ENCODE measurements at regions of chr1 and their contacts with region 1.

Region 1: DNA sequence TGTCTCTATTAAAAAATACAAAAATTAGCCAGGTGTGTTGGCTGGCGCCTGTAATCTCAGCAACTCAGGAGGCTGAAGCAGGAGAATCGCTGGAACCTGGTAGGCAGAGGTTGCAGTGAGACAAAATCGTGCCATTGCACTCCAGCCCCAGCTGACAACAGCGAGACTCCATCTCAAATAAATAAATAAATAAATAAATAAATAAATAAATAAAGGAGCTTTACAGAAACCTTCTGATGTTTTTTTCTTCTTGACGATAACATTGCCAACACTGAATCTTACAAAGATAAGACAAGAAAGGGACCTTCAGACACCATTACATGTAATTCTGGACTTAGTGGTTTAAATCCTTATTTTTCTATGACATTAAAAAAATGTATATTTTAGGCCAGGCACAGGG is 47.8 kb upstream of the LGALS8 start:
- DNase-seq: no peak
- H3K4me3 ChIP-seq: no peak overlapping the region
- H3K27ac ChIP-seq: no peak overlapping the region
- H3K4me1 ChIP-seq: peaks cover 2% of the 10 kb centered on the region
- H3K27me3 ChIP-seq: no peaks in the 10 kb centered on the region
- CTCF ChIP-seq: no peak
- EP300 ChIP-seq: no peak
- POLR2A ChIP-seq: no peak

Region 2: DNA sequence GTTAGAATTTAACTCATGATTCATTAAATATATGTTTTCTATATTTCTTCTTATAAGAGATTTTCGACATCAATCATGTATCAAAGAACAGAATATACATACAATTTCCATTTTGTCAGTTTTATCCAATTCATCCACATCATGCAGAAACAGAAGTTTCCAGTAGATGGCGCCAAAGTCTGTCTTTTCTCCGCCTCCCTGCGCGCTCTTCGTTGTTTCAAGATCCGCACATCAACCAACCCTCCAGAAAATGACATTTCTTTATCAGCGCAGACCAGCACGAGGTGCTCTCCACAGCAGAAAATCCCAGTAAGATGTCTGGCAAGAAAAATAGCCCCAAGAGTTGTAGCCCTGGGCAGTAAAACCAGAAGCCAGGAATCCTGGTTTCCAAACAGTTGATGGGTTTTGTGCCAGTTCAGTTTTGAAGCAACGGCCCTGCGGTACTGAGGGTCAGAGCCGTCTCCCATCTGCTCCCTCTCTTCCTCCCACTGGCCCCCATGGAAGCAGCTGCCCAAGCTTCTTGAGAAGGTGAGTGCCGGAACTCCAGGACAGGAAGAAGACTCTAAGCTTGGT is 372.3 kb before region 1 on chr1:
- intact Hi-C with region 1: loop called in 1 of 4 experiments (anchors 5 kb)
- DNase-seq: peak; percentile 28 to 55 (median 50)
- H3K4me3 ChIP-seq: no peak overlapping the region
- H3K27ac ChIP-seq: no peak overlapping the region
- H3K4me1 ChIP-seq: no peaks in the 10 kb centered on the region
- H3K27me3 ChIP-seq: no peaks in the 10 kb centered on the region
- CTCF ChIP-seq: peak; percentile 61 to 69 (median 68)
- EP300 ChIP-seq: no peak
- POLR2A ChIP-seq: no peak

Region 3: DNA sequence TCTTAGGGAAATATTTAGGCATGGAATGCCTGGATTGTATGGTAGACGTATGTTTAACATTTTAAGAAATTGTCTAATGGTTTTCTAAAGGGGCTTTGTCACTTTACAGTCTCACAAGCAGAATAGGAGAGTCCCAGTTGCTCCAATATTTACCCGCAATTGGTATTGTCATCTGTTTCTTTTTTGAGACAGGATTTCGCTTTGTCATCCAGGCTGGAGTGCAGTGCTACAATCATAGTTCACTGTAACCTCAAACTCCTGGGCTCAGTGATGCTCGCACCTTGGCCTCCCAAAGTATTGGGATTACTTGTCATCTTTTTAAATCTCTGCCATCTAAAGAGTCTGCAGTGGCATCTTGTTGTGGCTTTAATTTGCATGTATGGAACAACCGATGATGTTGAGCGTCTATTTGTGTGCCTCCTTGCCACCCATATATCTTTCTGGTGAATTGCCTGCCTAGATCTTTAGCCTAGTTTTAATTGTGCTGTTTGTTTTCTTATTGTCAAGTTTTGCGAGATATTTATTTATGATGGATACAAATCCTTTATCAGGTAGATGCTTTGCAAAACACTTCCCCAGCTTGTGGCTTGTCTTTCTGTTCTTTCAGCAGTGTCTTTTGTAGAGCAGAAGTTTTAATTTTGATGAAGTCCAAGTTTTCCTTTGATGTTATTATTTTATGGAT is 114.0 kb before region 1 on chr1:
- intact Hi-C with region 1: no loop called
- DNase-seq: no peak
- H3K4me3 ChIP-seq: no peak overlapping the region
- H3K27ac ChIP-seq: no peak overlapping the region
- H3K4me1 ChIP-seq: no peaks in the 10 kb centered on the region
- H3K27me3 ChIP-seq: no peaks in the 10 kb centered on the region
- CTCF ChIP-seq: no peak
- EP300 ChIP-seq: no peak
- POLR2A ChIP-seq: no peak

Measured in ovary (tissue), 10 donors.